PC-3 (cell line): ENCODE measurements at regions of chr13 and their contacts with region 1.

Region 1: DNA sequence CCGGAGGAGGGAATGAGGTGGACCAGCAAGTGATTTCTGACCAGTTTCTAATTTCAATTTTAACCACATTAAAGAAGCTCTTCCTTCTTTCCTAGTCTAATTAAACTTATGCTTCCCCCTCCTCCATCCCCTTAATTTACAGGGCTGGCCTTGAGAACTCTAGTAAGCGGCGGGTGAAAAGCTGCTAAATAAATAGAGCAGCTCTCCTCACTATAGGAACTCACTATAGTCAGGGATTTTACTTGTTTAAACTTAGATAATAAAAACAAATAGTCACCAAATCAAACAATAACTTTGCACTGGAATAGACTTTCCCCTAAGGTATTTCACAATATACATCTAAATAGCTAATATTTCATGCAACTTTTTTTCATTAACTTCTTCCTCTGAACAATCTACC is 1838.2 kb upstream of the PRR20A start:
- DNase-seq: peak; percentile 14
- ATAC-seq: peak; percentile 95
- H3K4me3 ChIP-seq: no peak overlapping the region
- H3K27ac ChIP-seq: no peak overlapping the region
- H3K4me1 ChIP-seq: no peaks in the 10 kb centered on the region
- H3K27me3 ChIP-seq: no peaks in the 10 kb centered on the region
- CTCF ChIP-seq: no peak

Region 2: GRCh38 chr13:55245005-55245644 is 57.4 kb before region 1 on chr13:
- CTCF ChIA-PET with region 1: no interaction called
- POLR2A ChIA-PET with region 1: no interaction called
- intact Hi-C with region 1: no loop called
- DNase-seq: no peak
- ATAC-seq: no peak
- H3K4me3 ChIP-seq: no peak overlapping the region
- H3K27ac ChIP-seq: no peak overlapping the region
- H3K4me1 ChIP-seq: no peaks in the 10 kb centered on the region
- H3K27me3 ChIP-seq: no peaks in the 10 kb centered on the region
- CTCF ChIP-seq: peak; percentile 26

Region 3: GRCh38 chr13:55627221-55627620 is 324.7 kb after region 1 on chr13:
- CTCF ChIA-PET with region 1: no interaction called
- POLR2A ChIA-PET with region 1: no interaction called
- intact Hi-C with region 1: no loop called
- DNase-seq: no peak
- ATAC-seq: no peak
- H3K4me3 ChIP-seq: no peak overlapping the region
- H3K27ac ChIP-seq: no peak overlapping the region
- H3K4me1 ChIP-seq: no peaks in the 10 kb centered on the region
- H3K27me3 ChIP-seq: no peaks in the 10 kb centered on the region
- CTCF ChIP-seq: no peak

Region 4: GRCh38 chr13:56351041-56351440 is 1048.5 kb after region 1 on chr13:
- CTCF ChIA-PET with region 1: no interaction called
- POLR2A ChIA-PET with region 1: no interaction called
- intact Hi-C with region 1: loop called (anchors 10 kb)
- DNase-seq: peak; percentile 28
- ATAC-seq: peak; percentile 88
- H3K4me3 ChIP-seq: no peak overlapping the region
- H3K27ac ChIP-seq: no peak overlapping the region
- H3K4me1 ChIP-seq: no peaks in the 10 kb centered on the region
- H3K27me3 ChIP-seq: no peaks in the 10 kb centered on the region
- CTCF ChIP-seq: no peak